Dorsolateral prefrontal cortex (tissue), 120 donors: ENCODE measurements at regions of chr1 and their contacts with region 1.

Region 1: DNA sequence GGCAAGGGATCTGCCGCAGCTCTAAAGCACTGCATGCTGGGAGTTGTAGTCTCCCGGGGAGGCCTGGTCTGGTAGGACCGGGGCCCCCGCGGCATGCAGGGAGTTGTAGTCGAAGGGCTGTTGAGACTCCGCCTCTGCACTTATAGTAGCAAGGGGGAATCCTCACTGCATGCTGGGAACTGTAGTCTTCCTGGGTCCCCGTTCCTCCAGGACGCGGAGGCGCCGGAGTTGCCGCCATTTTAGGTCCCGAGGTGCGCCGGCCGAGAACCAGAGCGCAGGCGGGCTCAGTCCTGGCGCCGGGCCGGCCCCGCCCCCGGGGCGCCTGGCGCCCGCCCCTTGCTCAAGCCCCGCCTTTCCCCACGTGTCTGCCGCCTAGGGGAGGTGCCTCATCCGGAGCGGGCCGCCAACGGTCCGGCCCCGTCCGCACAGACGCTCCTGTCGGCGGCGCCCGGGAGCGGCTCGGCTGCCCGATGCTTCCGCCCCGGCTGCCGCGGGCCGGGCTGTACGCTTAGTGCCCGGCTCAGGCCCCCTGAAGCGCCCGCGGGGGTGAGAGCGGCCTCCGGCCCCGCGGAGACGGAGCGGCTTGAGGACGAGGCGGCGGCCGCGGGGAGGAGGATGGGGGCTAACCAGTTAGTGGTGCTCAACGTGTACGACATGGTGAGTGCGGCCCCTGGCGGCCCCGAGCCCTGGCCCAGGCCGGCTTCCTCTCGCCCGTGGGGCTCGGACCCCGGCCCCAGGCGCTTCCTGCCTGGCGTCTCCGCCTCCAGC is at the start of gene DESI2:
- DNase-seq: peak; percentile 96 to 100 (median 99)
- H3K4me3 ChIP-seq: peak within 1 kb of the TSS; percentile 67 to 99 (median 90)
- H3K27ac ChIP-seq: peak within 1 kb of the TSS; percentile 63 to 97 (median 92)
- H3K27me3 ChIP-seq: no peaks in the 10 kb centered on the region
- CTCF ChIP-seq: peak; percentile 8 to 77 (median 56)
- total RNA-seq, gene DESI2: 8.3 to 17.4 (median 11.9) TPM

Region 2: DNA sequence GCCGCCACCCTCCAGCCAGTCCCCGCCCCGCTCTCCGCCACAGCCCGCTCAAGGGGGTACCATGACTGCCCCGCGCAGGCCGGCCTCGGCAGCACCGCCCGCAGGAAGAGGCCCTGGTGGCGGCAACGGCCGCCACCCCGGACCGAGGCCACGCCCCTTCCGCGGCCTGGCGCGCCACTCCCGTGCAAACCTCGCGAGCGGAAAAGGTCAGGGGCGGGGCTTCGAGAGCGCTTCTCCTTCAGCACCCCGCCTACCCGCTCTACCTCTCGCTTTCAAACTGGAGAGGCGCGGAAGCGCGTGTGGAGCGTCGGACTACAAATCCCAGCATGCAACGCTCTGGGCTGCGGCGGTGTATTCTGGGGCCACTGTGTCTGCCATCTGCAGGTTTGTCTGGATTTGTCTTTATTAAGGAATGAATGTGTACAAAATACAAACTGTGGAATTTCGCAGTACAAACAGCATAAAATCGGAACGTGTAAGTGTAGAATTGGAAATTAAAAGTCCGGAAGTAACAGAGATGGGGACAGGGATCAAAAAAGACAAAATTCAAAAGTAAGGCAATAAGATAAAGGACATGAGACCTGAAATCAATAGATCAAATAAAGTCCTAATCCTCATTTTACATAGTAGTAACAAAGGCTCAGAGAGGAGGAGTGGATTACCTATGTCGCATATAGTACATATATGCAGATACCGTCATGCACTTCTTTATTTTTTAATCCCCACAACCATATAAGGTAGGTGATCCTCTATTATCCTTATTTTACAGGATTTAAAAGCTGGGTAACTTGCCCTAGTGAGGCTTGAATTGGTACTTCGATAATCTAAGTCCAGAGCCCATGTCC is 200.7 kb before region 1 on chr1:
- intact Hi-C with region 1: loop called (anchors 2 to 5 kb)
- DNase-seq: peak; percentile 94 to 99 (median 98)
- H3K4me3 ChIP-seq: peak overlapping the region; percentile 70 to 99 (median 95)
- H3K27ac ChIP-seq: peak overlapping the region; percentile 80 to 98 (median 94)
- H3K27me3 ChIP-seq: no peaks in the 10 kb centered on the region
- CTCF ChIP-seq: peak; percentile 24 to 77 (median 65)

Region 3: DNA sequence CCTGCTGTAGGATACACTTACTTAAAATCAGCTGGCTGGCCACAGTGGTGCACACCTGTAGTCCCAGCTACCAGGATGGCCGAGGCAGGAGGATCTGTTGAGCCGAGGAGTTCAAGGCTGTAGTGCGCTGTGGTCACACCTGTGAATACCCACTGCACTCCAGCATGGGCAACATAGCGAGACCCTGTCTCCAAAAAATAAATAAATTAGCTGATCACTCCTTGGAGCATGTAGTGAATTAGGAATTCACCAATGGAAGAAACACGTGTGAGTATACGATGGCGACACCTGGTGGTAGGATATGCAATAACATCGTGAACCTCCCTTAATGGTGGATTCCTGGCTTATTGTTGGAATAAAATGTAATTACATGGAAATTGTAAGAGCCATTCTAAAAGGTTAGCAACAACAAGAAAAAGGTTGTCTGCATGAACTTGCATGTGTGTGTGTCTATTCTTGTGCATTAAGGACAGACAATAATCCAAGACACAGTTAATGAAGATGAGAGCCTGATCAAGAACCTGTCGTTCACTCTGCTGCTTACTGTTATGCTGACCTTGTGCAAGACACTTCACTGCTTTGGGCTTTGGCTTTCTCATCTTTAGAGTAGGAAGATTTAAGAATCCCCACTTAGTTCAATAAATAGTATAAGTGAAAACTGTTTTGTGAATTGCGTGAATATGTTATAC is 144.0 kb after region 1 on chr1:
- intact Hi-C with region 1: loop called in 1 of 2 experiments (anchors 5 kb)
- DNase-seq: peak in 6 of 10 donors; percentile 45 to 81 (median 68)
- H3K4me3 ChIP-seq: no peak overlapping the region
- H3K27ac ChIP-seq: no peak overlapping the region
- H3K27me3 ChIP-seq: no peaks in the 10 kb centered on the region
- CTCF ChIP-seq: peak; percentile 84 to 98 (median 93)

Region 4: DNA sequence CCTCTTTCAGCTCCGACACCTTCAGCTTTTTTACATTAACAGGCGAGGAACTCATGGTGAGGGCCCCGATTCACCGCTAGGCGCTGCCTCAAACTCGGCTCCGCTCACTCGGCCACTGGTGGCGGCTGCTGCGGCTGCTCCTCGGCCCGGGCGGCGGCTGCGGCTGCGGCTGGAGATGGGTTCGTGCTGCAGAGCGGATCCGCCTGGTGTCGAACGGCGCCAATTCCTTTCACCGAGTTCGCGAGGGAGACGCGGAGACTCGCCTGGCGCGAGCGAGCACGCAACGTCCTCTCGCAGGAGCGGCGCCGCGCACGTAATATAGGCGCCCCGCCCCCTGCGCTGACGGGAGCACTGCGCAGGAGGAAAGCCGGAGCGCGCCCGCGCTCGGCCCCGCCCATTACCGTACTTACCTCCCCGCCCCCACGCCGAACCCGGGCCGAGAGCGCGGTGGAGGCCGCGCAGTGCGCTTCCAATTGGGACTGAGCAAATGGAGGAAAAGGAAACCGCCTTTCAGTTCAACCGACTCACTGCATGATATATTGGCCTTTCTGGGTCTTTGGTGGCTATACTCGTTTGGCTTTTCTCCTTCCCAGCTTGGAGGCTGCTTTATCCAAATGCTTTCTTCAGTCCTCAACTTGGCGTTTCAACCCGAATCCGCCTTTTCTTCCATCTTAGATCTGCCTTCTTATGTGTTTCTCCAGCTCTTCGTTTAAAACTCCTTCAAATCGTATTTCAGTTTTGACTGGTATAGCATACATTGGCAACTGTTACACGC is 211.6 kb after region 1 on chr1 and contains the start of gene HNRNPU:
- intact Hi-C with region 1: loop called (anchors 5 to 10 kb)
- DNase-seq: peak; percentile 92 to 98 (median 97)
- H3K4me3 ChIP-seq: peak within 1 kb of the TSS; percentile 73 to 100 (median 97)
- H3K27ac ChIP-seq: peak within 1 kb of the TSS; percentile 92 to 100 (median 100)
- H3K27me3 ChIP-seq: no peaks in the 10 kb centered on the region
- CTCF ChIP-seq: peak in 45 of 56 donors; percentile 11 to 58 (median 34)
- total RNA-seq, gene HNRNPU: 196 to 344 (median 257) TPM

Region 5: DNA sequence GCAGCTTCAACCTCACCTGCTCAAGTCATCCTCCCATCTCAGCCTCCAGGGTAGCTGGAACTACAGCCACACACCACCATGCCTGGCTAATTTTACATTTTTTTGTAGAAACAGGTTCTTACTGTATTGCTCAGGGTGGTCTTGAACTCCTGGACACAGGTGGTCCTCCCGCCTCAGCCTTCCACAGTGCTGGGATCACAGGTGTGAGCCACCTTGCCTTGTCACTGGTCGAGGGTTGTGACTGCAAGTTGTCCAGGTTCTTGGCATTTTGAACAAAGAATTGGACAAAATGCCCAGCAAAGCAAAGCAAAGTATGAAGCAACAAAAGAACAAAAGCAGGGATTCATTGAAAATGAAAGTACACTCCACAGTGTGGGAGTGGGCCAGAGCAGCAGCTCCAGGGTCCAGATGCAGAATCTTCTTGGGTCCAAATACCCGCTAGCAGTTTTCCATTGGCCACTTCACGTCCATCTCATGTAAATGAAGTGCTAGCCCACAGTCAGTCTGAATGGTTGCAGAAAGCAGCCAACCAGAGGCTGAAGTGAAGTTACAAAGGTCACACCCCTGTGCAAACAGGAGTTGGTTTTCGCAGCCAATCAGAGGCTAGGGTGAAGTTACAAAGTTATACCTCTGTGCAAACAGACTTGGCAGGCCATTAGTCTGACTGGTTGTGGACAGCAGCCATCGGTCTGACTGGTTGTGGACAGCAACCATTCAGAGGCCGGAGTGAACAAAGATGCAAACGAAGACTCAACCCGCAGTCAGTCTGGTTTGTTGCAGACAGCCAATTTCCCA is 392.4 kb after region 1 on chr1:
- intact Hi-C with region 1: loop called in 1 of 2 experiments (anchors 10 kb)
- DNase-seq: peak in 1 of 10 donors; percentile 42
- H3K4me3 ChIP-seq: peak overlapping the region in 50 of 59 donors; percentile 1 to 54 (median 30)
- H3K27ac ChIP-seq: peak overlapping the region in 32 of 59 donors; percentile 9 to 88 (median 53)
- H3K27me3 ChIP-seq: no peaks in the 10 kb centered on the region
- CTCF ChIP-seq: no peak